ENCODE measurements at regions of chr2 and their contacts with region 1.

Region 1: GRCh38 chr2:102975996-102976975 is 214.5 kb downstream of the TMEM182 start:
- DNase-seq: peak; percentile 60 to 65
- H3K4me3 ChIP-seq: no peak overlapping the region
- H3K4me3 Mint-ChIP-seq: no peak overlapping the region
- H3K27ac Mint-ChIP-seq: no peak overlapping the region
- H3K4me1 ChIP-seq: no peaks in the 10 kb centered on the region
- H3K4me1 Mint-ChIP-seq: no peaks in the 10 kb centered on the region
- H3K27me3 ChIP-seq: 0 out of 2 replicates have a peak, but pooled peaks cover 2% of the 10 kb centered on the region
- H3K27me3 Mint-ChIP-seq: peaks cover 26% of the 10 kb centered on the region
- CTCF ChIP-seq: peak; percentile 59 to 91

Region 2: DNA sequence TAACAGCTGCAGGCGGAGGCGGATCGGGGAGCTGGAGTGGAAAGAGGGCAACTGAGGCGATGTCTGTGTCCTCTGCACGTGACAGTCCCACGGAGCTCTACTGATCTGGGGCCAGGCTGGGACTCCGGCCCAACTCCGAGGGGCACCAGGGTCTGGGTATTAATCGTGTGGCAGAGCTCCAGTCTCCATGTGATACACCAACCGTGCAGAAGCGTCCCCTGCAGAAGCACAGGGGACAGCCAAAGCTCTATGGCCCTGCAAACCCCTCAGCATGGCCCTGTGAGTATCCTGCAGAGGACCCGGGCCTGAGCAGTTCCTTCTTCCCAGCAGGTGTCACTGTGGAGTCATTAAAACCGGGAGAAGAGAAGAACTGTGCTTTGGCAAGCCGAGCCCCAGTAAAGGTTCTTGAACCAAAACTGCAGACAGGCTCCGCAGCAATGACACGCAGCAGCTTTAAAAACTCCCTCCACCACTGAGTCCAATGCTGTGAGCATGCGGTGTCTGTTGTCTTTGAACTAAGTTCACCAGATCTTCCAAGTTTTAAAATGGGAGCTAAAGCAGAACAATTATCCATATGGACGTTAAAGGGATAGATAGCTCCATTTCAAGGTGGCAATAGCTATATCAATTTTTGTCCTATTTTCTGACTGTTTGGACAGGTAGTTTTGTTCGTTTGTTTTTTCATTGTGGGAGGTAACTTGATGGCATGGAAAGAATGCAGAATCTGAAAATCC is 135.0 kb before region 1 on chr2:
- CTCF ChIA-PET with region 1: no interaction called
- POLR2A ChIA-PET with region 1: no interaction called
- intact Hi-C with region 1: loop called (anchors 5 kb)
- DNase-seq: peak; percentile 57 to 65
- H3K4me3 ChIP-seq: no peak overlapping the region
- H3K4me3 Mint-ChIP-seq: no peak overlapping the region
- H3K27ac Mint-ChIP-seq: no peak overlapping the region
- H3K4me1 ChIP-seq: no peaks in the 10 kb centered on the region
- H3K4me1 Mint-ChIP-seq: no peaks in the 10 kb centered on the region
- H3K27me3 ChIP-seq: no peaks in the 10 kb centered on the region
- H3K27me3 Mint-ChIP-seq: no peaks in the 10 kb centered on the region
- CTCF ChIP-seq: peak; percentile 67 to 70

Region 3: GRCh38 chr2:103008586-103008985 is 32.3 kb after region 1 on chr2:
- CTCF ChIA-PET with region 1: interaction called, 4 read pairs
- POLR2A ChIA-PET with region 1: no interaction called
- intact Hi-C with region 1: loop called (anchors 1 kb)
- DNase-seq: peak in 1 of 2 experiments; percentile 19
- H3K4me3 ChIP-seq: no peak overlapping the region
- H3K4me3 Mint-ChIP-seq: no peak overlapping the region
- H3K27ac Mint-ChIP-seq: no peak overlapping the region
- H3K4me1 ChIP-seq: no peaks in the 10 kb centered on the region
- H3K4me1 Mint-ChIP-seq: no peaks in the 10 kb centered on the region
- H3K27me3 ChIP-seq: no peaks in the 10 kb centered on the region; the same call in 1 of the 2 replicates
- H3K27me3 Mint-ChIP-seq: peaks cover 8% of the 10 kb centered on the region
- CTCF ChIP-seq: peak in 1 of 2 experiments; percentile 3